Left ventricle myocardium superior (tissue), 1 donor: ENCODE measurements at regions of chr6 and their contacts with region 1.

Region 1: GRCh38 chr6:149834513-149835481 is 29.4 kb downstream of the LRP11 start:
- DNase-seq: no peak
- ATAC-seq: peak; percentile 34

Region 2: DNA sequence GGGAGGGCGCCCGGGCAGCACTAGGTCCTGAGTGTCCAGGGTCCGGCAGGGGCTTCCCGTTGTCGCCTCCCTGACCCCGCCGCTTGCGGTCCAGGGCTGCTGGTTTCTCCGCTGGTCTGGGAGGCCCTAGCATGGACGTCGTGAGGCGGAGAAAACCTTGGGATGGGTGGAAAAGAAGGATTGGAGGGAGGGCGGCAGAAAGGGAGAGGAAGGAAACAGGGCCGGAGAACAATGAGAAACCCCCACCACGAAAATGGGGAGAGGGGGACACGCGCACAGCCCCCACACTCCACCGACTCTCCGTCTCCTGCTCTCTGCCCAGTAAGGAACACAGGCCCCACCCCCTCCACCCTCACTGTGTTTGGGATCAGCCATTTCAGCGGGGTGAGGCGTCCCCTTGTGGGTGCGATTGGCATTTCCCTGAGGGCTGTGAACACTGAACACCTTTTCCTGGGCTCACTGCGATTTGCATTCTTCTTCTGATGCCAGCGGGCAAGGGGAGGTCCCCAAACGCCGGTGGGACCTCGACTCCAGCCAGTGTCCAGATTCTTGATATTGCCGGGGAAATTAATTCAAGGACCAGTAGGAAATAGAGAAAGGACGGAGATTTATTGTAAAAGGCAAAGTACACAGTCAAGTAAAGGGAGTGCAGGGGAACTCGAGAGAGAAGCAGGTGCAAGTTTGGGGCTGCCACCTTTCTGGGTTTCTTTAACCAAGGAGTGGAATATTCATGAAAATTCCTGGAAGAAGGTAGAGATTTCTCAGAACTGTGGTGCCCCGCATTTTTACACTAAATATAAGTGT is 91.4 kb after region 1 on chr6:
- intact Hi-C with region 1: loop called (anchors 5 kb)
- DNase-seq: peak; percentile 92
- ATAC-seq: peak; percentile 93